Tibial artery (tissue), 4 donors: ENCODE measurements at regions of chr5 and their contacts with region 1.

Region 1: GRCh38 chr5:172640822-172641358 is at the start of gene NEURL1B:
- DNase-seq: peak; percentile 52 to 83
- H3K4me3 ChIP-seq: peak within 1 kb of the TSS; percentile 74 to 92
- H3K27ac ChIP-seq: peak within 1 kb of the TSS; percentile 87 to 88
- H3K4me1 ChIP-seq: peaks cover 0 to 59% (median 47%) of the 10 kb centered on the region in 4 donors
- H3K27me3 ChIP-seq: no peaks in the 10 kb centered on the region
- CTCF ChIP-seq: peak in 1 of 2 experiments; percentile 25

Region 2: DNA sequence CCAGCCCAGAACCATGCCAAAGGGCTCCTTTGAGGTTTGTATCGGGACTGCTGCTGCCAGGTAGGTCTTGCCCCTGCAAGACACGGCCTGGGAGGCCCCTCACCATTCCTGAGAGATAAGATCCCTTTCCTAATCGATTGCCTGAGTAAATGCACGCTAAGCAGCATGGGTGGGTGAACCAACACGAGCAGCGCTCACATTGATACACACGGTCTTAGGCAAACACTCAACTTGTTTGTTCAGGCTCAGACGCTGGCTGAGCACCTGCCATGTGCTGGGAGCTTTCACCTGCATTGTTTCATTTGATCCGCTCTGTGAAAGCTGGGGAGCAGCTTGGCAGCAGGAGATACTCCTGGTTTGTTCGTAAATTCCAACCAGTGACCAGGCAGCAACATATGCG is 76.7 kb before region 1 on chr5:
- intact Hi-C with region 1: loop called (anchors 10 kb)
- DNase-seq: no peak
- H3K4me3 ChIP-seq: no peak overlapping the region
- H3K27ac ChIP-seq: no peak overlapping the region
- H3K4me1 ChIP-seq: peaks cover 0 to 2% (median 0%) of the 10 kb centered on the region in 4 donors
- H3K27me3 ChIP-seq: no peaks in the 10 kb centered on the region
- CTCF ChIP-seq: no peak

Region 3: GRCh38 chr5:172697123-172698121 is 56.5 kb after region 1 on chr5:
- intact Hi-C with region 1: loop called (anchors 5 kb)
- DNase-seq: peak; percentile 89 to 93
- H3K4me3 ChIP-seq: peak overlapping the region; percentile 54 to 66
- H3K27ac ChIP-seq: peak overlapping the region; percentile 69 to 77
- H3K4me1 ChIP-seq: peaks cover 0 to 48% (median 45%) of the 10 kb centered on the region in 4 donors
- H3K27me3 ChIP-seq: peaks cover 0 to 3% of the 10 kb centered on the region in 2 donors
- CTCF ChIP-seq: peak; percentile 88 to 94